ENCODE measurements at regions of chr9 and their contacts with region 1.

Region 1: DNA sequence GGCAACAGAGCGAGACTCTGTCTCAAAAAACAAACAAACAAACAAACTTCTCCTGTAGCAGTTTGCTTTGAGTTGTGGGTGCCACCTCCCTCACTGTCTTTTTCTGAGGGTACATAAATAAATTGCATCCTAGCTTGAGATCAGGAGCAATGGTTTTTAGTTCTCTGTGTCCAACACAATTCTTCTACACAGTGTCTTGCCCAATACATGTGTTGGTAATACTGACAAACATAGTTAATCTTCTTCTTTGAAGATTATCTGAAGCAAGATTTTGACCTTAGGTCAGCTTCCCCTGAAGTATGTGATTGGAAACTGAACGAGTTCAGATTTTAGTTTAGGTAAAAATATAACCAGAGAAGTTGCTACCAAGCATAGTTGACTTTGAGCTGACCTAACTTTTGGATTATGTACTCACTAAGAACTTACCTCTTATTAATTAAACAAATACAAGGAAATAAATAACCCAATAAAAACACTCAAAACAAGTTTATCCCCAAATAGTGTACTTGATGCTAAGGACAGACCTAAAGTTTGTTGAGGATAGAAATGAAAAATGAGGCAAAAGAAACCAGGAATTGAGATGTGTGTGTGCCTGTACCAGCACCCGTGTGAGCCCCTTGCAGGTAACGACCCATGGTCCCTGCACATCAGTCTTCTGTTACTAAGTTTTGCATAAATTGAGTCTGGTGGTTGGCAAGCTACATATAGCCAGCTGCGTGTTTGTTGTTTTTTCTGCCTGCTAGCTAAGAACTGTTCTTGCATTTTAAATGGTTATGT is 16.2 kb downstream of the TJP2 start:
- DNase-seq: no peak
- ATAC-seq: no peak
- H3K4me3 Mint-ChIP-seq: no peak overlapping the region
- H3K27ac Mint-ChIP-seq: no peak overlapping the region
- H3K4me1 Mint-ChIP-seq: peaks cover 6% of the 10 kb centered on the region
- H3K27me3 Mint-ChIP-seq: no peaks in the 10 kb centered on the region
- CTCF ChIP-seq: no peak

Region 2: GRCh38 chr9:68933434-68934328 is 256.6 kb before region 1 on chr9:
- CTCF ChIA-PET with region 1: no interaction called
- POLR2A ChIA-PET with region 1: no interaction called
- intact Hi-C with region 1: no loop called
- DNase-seq: no peak
- ATAC-seq: no peak
- H3K4me3 Mint-ChIP-seq: no peak overlapping the region
- H3K27ac Mint-ChIP-seq: no peak overlapping the region
- H3K4me1 Mint-ChIP-seq: peaks cover 14% of the 10 kb centered on the region
- H3K27me3 Mint-ChIP-seq: no peaks in the 10 kb centered on the region
- CTCF ChIP-seq: no peak

Region 3: GRCh38 chr9:69049094-69049493 is 141.2 kb before region 1 on chr9:
- CTCF ChIA-PET with region 1: interaction called, 60 read pairs
- POLR2A ChIA-PET with region 1: no interaction called
- intact Hi-C with region 1: loop called (anchors 1 kb)
- DNase-seq: no peak
- ATAC-seq: no peak
- H3K4me3 Mint-ChIP-seq: no peak overlapping the region
- H3K27ac Mint-ChIP-seq: no peak overlapping the region
- H3K4me1 Mint-ChIP-seq: no peaks in the 10 kb centered on the region
- H3K27me3 Mint-ChIP-seq: no peaks in the 10 kb centered on the region
- CTCF ChIP-seq: no peak

Region 4: GRCh38 chr9:69056191-69056815 is 134.0 kb before region 1 on chr9:
- CTCF ChIA-PET with region 1: interaction called, 60 read pairs
- POLR2A ChIA-PET with region 1: no interaction called
- intact Hi-C with region 1: loop called (anchors 1 kb)
- DNase-seq: no peak
- ATAC-seq: no peak
- H3K4me3 Mint-ChIP-seq: no peak overlapping the region
- H3K27ac Mint-ChIP-seq: no peak overlapping the region
- H3K4me1 Mint-ChIP-seq: peaks cover 5% of the 10 kb centered on the region
- H3K27me3 Mint-ChIP-seq: no peaks in the 10 kb centered on the region
- CTCF ChIP-seq: no peak

Region 5: DNA sequence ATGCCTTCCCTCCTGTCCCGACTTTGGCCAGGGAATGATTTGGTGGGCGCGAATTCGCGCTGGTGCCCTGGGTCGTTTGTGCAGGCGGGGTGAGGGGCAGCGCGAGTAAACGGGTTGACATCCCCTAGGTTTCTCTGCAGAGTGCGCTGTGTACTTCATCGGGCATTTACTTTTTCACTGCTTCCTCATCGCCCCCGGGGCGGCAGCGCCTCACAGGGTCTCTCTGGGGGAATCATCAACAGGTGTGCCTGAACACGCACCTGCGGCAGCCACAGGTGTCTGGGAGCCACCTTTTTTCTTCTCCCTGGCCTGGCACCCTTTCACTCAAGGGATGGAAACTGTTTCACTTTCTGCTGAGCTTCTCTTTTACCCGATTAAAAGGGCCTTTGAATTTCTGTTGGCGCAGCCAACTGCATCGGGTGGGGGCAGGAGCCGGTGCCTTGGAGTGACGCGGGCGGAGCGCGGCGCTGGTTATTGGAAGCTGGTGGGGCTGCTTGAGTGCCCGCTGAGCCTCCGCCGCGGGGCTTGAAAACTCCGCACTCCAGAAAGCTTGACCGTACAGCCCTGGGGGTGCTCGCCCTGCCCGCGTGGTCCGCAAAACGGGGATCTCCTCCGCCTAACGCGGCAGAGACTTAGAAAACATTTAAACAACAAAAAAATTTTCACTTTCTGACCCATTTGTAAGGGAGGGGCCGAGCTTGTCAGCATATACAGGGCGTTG is 68.3 kb before region 1 on chr9:
- CTCF ChIA-PET with region 1: no interaction called
- POLR2A ChIA-PET with region 1: no interaction called
- intact Hi-C with region 1: loop called (anchors 5 kb)
- DNase-seq: peak; percentile 45
- ATAC-seq: peak; percentile 74
- H3K4me3 Mint-ChIP-seq: peak overlapping the region; percentile 92
- H3K27ac Mint-ChIP-seq: peak overlapping the region; percentile 30
- H3K4me1 Mint-ChIP-seq: peaks cover 18% of the 10 kb centered on the region
- H3K27me3 Mint-ChIP-seq: no peaks in the 10 kb centered on the region
- CTCF ChIP-seq: no peak

Region 6: DNA sequence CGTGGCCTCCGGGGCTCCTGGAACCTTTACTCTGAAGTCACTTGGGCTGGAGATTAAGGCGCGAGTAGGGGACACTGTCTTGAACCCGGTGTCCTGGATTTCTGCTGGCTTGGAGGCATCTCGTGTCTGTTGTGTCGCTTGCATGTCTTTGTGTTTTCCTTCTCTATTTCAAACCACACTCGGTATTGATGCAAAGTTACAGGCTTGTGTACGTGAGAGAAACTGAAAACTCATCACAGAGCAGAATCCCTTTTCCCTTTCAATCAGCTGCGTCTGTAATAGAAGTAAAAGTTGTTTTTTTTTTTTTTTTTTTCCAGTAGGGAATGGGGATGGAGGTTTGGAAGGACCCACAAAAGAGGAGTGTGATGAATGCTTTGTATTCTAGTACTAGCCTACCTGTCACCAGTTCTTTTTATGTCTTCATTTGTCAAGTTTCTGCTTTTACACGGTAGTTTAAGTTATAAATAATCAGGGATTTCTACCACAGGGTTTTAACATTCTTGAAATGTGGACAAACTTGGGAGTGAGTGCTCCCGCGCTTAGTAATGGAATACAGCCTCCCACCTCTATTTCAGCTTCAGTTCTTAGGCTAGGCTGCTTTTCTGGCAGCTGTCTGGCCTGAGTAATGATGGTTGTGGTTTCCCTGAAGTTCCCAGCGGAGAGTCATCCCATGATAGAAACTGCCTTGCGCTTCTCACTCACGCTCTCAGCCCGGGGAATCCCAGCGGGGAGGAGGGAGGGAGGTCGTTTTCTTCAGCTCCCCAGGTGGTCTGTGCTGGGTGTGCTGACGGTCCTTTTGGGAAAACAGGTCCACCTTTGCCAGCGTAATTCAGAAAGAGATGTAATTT is 15.4 kb before region 1 on chr9:
- CTCF ChIA-PET with region 1: no interaction called
- POLR2A ChIA-PET with region 1: no interaction called
- intact Hi-C with region 1: no loop called
- DNase-seq: peak; percentile 19
- ATAC-seq: peak; percentile 68
- H3K4me3 Mint-ChIP-seq: peak overlapping the region; percentile 84
- H3K27ac Mint-ChIP-seq: no peak overlapping the region
- H3K4me1 Mint-ChIP-seq: peaks cover 33% of the 10 kb centered on the region
- H3K27me3 Mint-ChIP-seq: peaks cover 37% of the 10 kb centered on the region
- CTCF ChIP-seq: no peak

Region 7: GRCh38 chr9:69207503-69207902 is 17.2 kb after region 1 on chr9:
- CTCF ChIA-PET with region 1: no interaction called
- POLR2A ChIA-PET with region 1: no interaction called
- intact Hi-C with region 1: no loop called
- DNase-seq: no peak
- ATAC-seq: no peak
- H3K4me3 Mint-ChIP-seq: no peak overlapping the region
- H3K27ac Mint-ChIP-seq: no peak overlapping the region
- H3K4me1 Mint-ChIP-seq: no peaks in the 10 kb centered on the region
- H3K27me3 Mint-ChIP-seq: no peaks in the 10 kb centered on the region
- CTCF ChIP-seq: no peak

Measured in activated B cell treated with CpG ODN at 0.5 μM for 24 hours (primary cell).